A549 (cell line): ENCODE measurements at regions of chr19 and their contacts with region 1.

Region 1: GRCh38 chr19:41449079-41449864 is 6.3 kb downstream of the ERICH4 start:
- DNase-seq: peak; percentile 84 to 98
- ATAC-seq: peak; percentile 89 to 97
- H3K4me3 ChIP-seq: peak overlapping the region; percentile 26
- H3K27ac ChIP-seq: peak overlapping the region in 1 of 2 experiments; percentile 5; a peak in 1 of 6 replicates
- H3K4me1 ChIP-seq: 0 out of 3 replicates have a peak, but pooled peaks cover 3% of the 10 kb centered on the region
- CTCF ChIP-seq: peak; percentile 100
- EP300 ChIP-seq: no peak
- POLR2A ChIP-seq: no peak
- RAD21 ChIP-seq: peak; percentile 99 to 100

Region 2: DNA sequence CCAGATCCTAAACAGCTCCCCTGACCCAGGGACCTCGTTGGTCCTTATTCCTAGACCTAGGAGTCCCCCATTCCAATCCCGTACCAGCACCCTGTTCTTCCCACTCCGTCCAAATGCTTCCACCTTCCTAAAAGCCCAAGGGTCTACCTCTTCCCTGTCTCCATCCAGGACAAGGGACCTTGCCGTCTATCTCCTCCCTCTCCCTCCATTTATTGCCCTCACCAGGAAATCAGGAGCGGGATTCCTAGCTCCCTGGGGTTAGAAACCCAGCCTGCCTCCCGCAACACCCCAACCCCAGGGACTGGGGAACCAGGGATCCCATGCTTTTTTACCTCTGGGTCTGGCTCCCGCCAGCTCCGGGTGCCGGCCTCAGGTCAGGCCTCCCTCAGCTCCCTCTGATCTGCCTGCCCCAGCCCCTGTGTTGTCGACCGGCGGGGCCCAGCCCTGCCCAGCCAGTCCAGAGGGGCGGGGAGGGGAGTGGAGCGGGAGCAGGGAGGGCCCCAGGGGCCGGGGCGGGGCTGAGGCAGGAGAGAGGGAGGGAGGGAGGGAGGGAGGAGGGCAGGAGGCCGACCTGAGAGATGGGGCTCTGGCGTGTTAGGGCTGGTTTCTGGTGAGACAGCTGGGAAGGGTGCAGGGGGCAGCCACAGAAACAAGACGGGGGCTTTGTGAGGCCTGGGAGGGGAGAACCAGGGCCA is 22.2 kb before region 1 on chr19 and contains the start of gene B3GNT8:
- CTCF ChIA-PET with region 1: interaction called, 57 read pairs
- POLR2A ChIA-PET with region 1: no interaction called
- DNase-seq: no peak
- ATAC-seq: peak; percentile 7 to 10; a peak in 3 of 6 replicates
- H3K4me3 ChIP-seq: no peak within 1 kb of the TSS
- H3K27ac ChIP-seq: no peak within 1 kb of the TSS
- H3K4me1 ChIP-seq: no peaks in the 10 kb centered on the region
- CTCF ChIP-seq: no peak
- EP300 ChIP-seq: no peak
- POLR2A ChIP-seq: no peak
- RAD21 ChIP-seq: no peak
- polyA plus RNA-seq, gene B3GNT8: not detected in 2 replicates

Region 3: DNA sequence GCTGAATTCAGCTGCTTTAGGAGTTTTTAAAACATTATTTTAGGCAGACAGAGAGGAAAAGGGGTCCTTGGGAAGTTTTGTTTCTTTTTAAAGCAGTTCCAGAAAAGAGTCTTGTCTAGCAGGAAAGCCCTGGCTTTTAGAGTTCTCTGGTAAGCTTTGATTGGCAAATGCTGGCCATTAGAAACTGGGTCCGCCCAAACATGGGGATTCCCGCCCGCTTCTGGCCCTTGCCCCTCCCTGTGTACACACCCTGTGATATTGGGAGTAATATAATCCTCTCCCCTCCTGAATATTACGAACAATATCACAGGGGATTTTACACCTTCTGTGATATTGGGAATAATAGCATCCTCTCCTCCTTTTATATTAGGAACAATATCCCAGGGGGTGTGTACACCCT is 52.6 kb after region 1 on chr19:
- CTCF ChIA-PET with region 1: interaction called, 17 read pairs
- POLR2A ChIA-PET with region 1: no interaction called
- DNase-seq: peak in 1 of 2 experiments; percentile 53
- ATAC-seq: peak; percentile 36 to 60; a peak in 4 of 6 replicates
- H3K4me3 ChIP-seq: peak overlapping the region; percentile 35
- H3K27ac ChIP-seq: peak overlapping the region; percentile 66 to 82
- H3K4me1 ChIP-seq: peaks cover 15% of the 10 kb centered on the region
- CTCF ChIP-seq: no peak
- EP300 ChIP-seq: no peak
- POLR2A ChIP-seq: no peak
- RAD21 ChIP-seq: no peak

Region 4: GRCh38 chr19:41570639-41571112 is 121.4 kb after region 1 on chr19:
- CTCF ChIA-PET with region 1: interaction called, 1,358 read pairs
- POLR2A ChIA-PET with region 1: interaction called, 4 read pairs
- DNase-seq: peak; percentile 85 to 90
- ATAC-seq: peak; percentile 90 to 99
- H3K4me3 ChIP-seq: no peak overlapping the region
- H3K27ac ChIP-seq: no peak overlapping the region
- H3K4me1 ChIP-seq: no peaks in the 10 kb centered on the region; the same call in 2 of the 3 replicates
- CTCF ChIP-seq: peak; percentile 99
- EP300 ChIP-seq: no peak
- POLR2A ChIP-seq: no peak
- RAD21 ChIP-seq: peak; percentile 96 to 99

Region 5: GRCh38 chr19:41795031-41795461 is 345.8 kb after region 1 on chr19:
- CTCF ChIA-PET with region 1: interaction called, 11 read pairs
- POLR2A ChIA-PET with region 1: no interaction called
- DNase-seq: peak; percentile 49 to 70
- ATAC-seq: peak; percentile 61 to 89
- H3K4me3 ChIP-seq: no peak overlapping the region
- H3K27ac ChIP-seq: no peak overlapping the region
- H3K4me1 ChIP-seq: 0 out of 3 replicates have a peak, but pooled peaks cover 11% of the 10 kb centered on the region
- CTCF ChIP-seq: peak; percentile 96
- EP300 ChIP-seq: no peak
- POLR2A ChIP-seq: no peak
- RAD21 ChIP-seq: peak; percentile 32 to 47; a peak in 4 of 5 replicates